G401 (cell line): ENCODE measurements at regions of chr10 and their contacts with region 1.

Region 1: DNA sequence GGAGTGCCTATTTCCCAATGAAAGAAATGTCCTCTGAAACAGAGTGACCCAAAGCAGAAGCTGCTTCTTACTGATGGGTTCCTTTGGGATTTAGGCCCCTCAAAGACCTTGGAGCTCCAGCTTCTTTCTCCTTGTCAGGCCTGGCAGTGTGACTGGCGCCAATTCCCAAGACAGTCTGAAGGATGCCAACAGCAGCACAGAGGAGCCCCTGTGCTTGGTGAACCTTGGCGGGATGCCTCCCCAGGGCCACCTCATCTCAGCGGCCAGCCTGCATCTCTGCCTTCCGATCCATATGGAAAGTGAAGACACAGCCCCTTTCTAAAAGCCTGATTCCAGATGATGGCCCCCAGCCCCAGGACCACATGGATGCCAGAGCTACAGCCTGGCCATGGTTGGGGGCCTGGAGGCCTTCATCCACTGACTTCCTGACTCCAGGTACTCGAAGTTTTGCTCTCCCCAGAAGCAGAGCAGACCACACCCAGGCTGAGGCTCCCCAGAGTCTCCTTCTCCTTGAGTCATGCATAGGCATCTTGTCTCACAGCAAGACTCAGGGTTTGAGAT is 45.4 kb downstream of the FBXW4 start:
- DNase-seq: no peak

Region 2: DNA sequence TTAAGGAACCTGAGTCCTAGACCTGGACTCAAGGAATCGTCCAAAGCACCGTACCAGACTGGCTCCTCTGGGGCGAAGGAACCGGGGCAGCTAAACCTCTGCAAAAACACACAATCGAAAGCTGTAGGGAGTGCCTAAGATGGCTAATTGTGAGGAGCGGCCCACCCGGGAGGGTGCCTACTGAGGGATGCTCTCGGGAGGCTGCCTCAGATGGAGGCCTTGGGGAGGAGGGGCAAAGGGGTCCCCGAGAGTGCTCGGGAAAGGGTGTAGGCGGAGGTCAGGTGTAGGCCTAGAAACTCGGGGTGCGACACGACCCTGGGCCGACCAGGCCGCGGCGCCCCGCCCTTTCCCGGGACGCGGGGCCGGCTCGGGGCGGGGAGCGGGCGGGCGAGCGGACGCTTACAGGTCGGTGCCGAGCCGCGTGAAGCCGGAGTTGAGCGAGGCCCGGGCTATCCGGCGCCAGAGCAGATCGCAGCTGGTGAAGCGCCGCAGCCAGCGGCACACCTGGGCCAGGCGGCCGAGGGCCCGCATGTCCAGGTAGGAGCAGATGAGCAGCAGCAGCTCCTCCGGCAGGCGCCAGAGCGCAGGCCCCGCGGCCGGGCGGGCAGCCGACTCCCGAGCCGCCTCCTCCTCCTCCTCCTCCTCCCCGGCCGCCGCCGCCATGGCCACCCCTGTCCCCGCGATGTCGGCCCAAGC is 44.5 kb after region 1 on chr10:
- in situ Hi-C with region 1: loop called (anchors 5 kb)
- DNase-seq: peak; percentile 72